ENCODE measurements at regions of chr3 and their contacts with region 1.

Region 1: DNA sequence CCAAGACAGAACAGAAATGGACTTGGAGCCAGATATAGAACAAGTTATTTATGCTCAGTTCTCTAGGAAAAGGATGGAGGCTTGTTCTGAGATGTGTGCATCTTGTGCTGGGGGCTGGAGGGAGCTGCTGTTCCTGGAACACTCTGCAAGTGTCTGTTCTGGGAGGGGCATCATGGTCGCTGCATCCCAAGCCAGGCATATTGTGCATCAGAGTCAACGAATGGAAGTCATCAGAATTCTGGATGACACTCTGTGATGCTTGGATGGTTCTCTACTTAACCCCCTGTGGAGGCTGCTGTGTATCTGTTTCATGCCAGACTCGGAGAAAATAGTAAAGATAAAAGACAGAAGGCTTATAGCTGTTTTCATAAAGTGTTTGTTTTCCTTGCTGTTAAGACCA is 34.7 kb downstream of the RPL22L1 start:
- DNase-seq: no peak
- H3K4me3 Mint-ChIP-seq: no peak overlapping the region
- H3K27ac Mint-ChIP-seq: no peak overlapping the region
- H3K4me1 Mint-ChIP-seq: peaks cover 1% of the 10 kb centered on the region
- H3K27me3 Mint-ChIP-seq: peaks cover 51% of the 10 kb centered on the region

Region 2: DNA sequence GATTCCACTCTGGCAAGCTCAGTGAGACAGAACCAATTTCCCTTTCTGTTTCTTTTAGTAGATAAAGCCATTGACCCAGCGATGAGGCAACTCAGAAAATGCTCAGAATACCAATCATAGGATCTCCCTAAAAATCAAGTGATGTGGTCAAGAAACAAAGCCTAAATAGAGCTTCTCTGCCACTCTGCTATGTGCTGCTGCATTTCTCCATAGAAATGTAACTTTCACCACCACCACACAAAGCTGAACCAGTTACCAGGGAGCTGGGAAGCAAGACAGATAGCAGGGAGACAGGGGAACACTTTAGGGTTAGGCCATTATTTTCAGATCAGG is 75.2 kb before region 1 on chr3:
- CTCF ChIA-PET with region 1: no interaction called
- POLR2A ChIA-PET with region 1: no interaction called
- DNase-seq: no peak
- H3K4me3 Mint-ChIP-seq: no peak overlapping the region
- H3K27ac Mint-ChIP-seq: no peak overlapping the region
- H3K4me1 Mint-ChIP-seq: no peaks in the 10 kb centered on the region
- H3K27me3 Mint-ChIP-seq: peaks cover 6% of the 10 kb centered on the region

Region 3: DNA sequence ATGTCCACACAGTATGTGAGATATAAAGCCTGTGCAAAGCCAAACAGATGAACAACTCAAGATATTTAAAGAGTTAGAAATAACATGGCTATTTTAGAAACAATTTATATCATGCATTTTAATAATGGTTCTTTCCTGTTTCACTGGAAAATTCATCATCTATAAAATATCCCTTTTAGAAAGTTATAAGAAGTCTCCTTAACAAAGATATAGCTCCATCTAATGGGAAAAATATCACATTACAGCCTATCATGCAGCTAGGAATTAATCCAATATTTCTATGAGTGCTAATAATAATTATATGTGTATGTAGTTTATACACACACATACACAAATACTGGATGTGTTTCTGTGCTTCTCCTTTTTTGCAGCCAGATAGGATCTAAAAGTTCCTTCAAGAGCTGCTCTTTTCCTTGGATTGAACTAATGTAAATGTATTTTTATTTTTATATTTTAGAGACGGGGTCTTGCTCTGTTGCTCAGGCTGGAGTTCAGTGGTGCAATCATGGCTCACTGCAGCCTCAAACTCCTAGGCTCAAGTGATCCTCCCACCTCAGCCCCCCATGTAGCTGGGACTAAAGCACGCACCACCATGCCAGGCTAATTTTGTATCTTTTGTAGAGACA is 13.1 kb after region 1 on chr3:
- CTCF ChIA-PET with region 1: interaction called, 11 read pairs
- POLR2A ChIA-PET with region 1: no interaction called
- DNase-seq: no peak
- H3K4me3 Mint-ChIP-seq: no peak overlapping the region
- H3K27ac Mint-ChIP-seq: no peak overlapping the region
- H3K4me1 Mint-ChIP-seq: no peaks in the 10 kb centered on the region
- H3K27me3 Mint-ChIP-seq: peaks cover 32% of the 10 kb centered on the region

Region 4: DNA sequence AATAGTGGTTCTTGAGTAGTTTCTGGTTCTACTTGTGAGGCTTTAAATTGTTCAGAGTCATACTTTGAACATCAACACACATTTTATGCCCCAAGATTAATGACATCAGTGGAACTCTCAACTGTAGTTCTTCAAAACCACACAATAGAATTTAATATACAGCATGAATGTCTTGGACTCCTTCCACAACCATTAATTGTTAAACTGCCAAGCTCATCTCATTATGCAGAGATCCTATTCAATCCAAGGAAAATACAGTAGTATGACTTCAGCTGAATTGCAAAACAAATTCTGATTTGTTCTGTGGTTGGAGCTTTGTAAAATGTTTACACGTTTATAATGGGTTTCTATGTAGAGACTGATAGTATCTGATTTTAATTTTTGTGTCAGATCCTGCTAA is 390.4 kb after region 1 on chr3:
- CTCF ChIA-PET with region 1: no interaction called
- POLR2A ChIA-PET with region 1: no interaction called
- DNase-seq: no peak
- H3K4me3 Mint-ChIP-seq: no peak overlapping the region
- H3K27ac Mint-ChIP-seq: peak overlapping the region; percentile 35
- H3K4me1 Mint-ChIP-seq: peaks cover 28% of the 10 kb centered on the region
- H3K27me3 Mint-ChIP-seq: no peaks in the 10 kb centered on the region